ENCODE measurements at regions of chr1 and their contacts with region 1.

Region 1: GRCh38 chr1:1906185-1907097 is 8.6 kb upstream of the CALML6 start:
- DNase-seq: no peak
- H3K4me3 ChIP-seq: no peak overlapping the region
- H3K27me3 ChIP-seq: no peaks in the 10 kb centered on the region
- CTCF ChIP-seq: peak; percentile 97

Region 2: GRCh38 chr1:1374929-1375662 is 531.3 kb before region 1 on chr1 and contains the start of gene AURKAIP1:
- CTCF ChIA-PET with region 1: no interaction called
- POLR2A ChIA-PET with region 1: interaction called, 19 read pairs
- DNase-seq: peak; percentile 99
- H3K4me3 ChIP-seq: peak within 1 kb of the TSS; percentile 78
- H3K27me3 ChIP-seq: no peaks in the 10 kb centered on the region
- CTCF ChIP-seq: peak; percentile 51
- polyA plus RNA-seq, gene AURKAIP1: 73.2 and 97.8 TPM in 2 replicates

Region 3: DNA sequence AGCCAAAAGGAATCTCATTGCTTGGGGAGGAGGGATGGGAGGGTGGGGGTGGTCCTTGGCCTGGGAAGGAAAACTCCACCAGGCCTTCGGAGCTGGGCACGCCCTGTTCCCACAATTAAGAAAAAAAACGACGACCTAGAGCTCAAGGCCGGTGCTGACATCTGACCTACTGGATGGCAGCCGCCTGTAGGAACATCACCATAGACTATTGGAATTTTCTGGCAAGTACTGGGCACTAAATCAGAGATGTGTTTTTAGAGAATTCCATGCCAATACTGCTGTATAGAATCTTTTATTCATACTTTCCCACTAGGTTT is 128.9 kb before region 1 on chr1:
- CTCF ChIA-PET with region 1: interaction called, 13 read pairs
- POLR2A ChIA-PET with region 1: no interaction called
- DNase-seq: no peak
- H3K4me3 ChIP-seq: peak overlapping the region; percentile 90
- H3K27me3 ChIP-seq: no peaks in the 10 kb centered on the region
- CTCF ChIP-seq: no peak

Region 4: GRCh38 chr1:1784933-1785332 is 121.5 kb before region 1 on chr1:
- CTCF ChIA-PET with region 1: interaction called, 10 read pairs
- POLR2A ChIA-PET with region 1: no interaction called
- DNase-seq: no peak
- H3K4me3 ChIP-seq: no peak overlapping the region
- H3K27me3 ChIP-seq: no peaks in the 10 kb centered on the region
- CTCF ChIP-seq: no peak

Region 5: DNA sequence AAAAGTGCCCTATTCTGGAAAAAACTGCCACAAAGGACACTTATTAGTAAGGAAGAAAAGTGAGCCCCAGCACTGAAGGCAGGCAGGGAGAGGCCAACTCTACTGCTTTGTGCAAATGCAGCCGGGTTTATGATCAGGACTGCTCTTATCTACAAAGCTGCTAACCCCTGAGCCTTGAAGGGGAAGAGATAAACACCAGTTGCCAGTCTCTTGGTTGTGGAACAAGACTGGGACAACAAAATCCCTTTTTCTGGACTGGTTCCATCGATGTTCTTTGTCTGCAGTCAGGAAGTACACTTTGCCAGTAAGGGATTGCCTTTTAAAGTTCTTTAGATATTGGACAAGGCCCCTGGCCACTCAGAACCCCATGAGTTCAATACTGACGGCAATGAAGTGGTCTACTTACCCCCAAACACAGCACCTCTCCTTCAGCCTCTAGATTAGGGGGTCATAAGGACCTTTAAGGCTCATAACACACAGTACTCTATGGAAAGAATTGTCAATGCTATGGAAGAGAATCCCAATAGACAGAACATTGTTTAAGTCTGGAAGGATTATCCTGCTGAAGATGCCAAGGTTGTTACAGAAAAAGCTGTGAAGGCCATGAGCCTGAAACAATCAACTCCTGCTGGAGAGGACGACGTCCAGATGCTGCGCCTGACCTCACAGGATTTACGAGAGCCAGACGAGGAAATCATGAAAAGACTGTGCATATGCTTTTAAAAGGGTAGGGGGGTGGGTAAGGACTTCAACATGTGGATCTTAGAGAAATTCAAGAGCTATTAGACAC is 59.2 kb before region 1 on chr1:
- CTCF ChIA-PET with region 1: interaction called, 5 read pairs
- POLR2A ChIA-PET with region 1: interaction called, 13 read pairs
- DNase-seq: no peak
- H3K4me3 ChIP-seq: no peak overlapping the region
- H3K27me3 ChIP-seq: no peaks in the 10 kb centered on the region
- CTCF ChIP-seq: no peak

Region 6: GRCh38 chr1:2845869-2846268 is 939.4 kb after region 1 on chr1:
- CTCF ChIA-PET with region 1: no interaction called
- POLR2A ChIA-PET with region 1: interaction called, 10 read pairs
- DNase-seq: no peak
- H3K4me3 ChIP-seq: no peak overlapping the region
- H3K27me3 ChIP-seq: no peaks in the 10 kb centered on the region
- CTCF ChIP-seq: no peak